Activated CD4-positive, alpha-beta T cell treated with anti-CD3 and anti-CD28 coated beads for 36 hours (primary cell): ENCODE measurements at regions of chr2 and their contacts with region 1.

Region 1: GRCh38 chr2:100562732-100563720 is at the start of gene PDCL3:
- DNase-seq: peak; percentile 96
- ATAC-seq: peak; percentile 96
- H3K4me3 Mint-ChIP-seq: peak within 1 kb of the TSS; percentile 85
- H3K27ac Mint-ChIP-seq: peak within 1 kb of the TSS; percentile 97
- H3K4me1 Mint-ChIP-seq: peaks cover 26% of the 10 kb centered on the region
- H3K27me3 Mint-ChIP-seq: no peaks in the 10 kb centered on the region
- total RNA-seq, gene PDCL3: 39.3 to 41.9 TPM

Region 2: GRCh38 chr2:98608116-98608999 is 1954.7 kb before region 1 on chr2 and contains the starts of genes COA5 and UNC50:
- CTCF ChIA-PET with region 1: no interaction called
- POLR2A ChIA-PET with region 1: no interaction called
- intact Hi-C with region 1: loop called in 1 of 2 experiments (anchors 5 kb)
- DNase-seq: peak; percentile 95
- ATAC-seq: peak; percentile 91
- H3K4me3 Mint-ChIP-seq: peak within 1 kb of the TSS; percentile 83
- H3K27ac Mint-ChIP-seq: peak within 1 kb of the TSS; percentile 94
- H3K4me1 Mint-ChIP-seq: peaks cover 61% of the 10 kb centered on the region
- H3K27me3 Mint-ChIP-seq: no peaks in the 10 kb centered on the region
- total RNA-seq, gene COA5: 17.7 to 33.2 TPM
- total RNA-seq, gene UNC50: 21.1 to 31.4 TPM

Region 3: GRCh38 chr2:99489761-99490622 is 1073.0 kb before region 1 on chr2 and contains the start of gene REV1:
- CTCF ChIA-PET with region 1: no interaction called
- POLR2A ChIA-PET with region 1: no interaction called
- intact Hi-C with region 1: loop called in 1 of 2 experiments (anchors 1 kb)
- DNase-seq: peak; percentile 97
- ATAC-seq: peak; percentile 89
- H3K4me3 Mint-ChIP-seq: peak within 1 kb of the TSS; percentile 89
- H3K27ac Mint-ChIP-seq: peak within 1 kb of the TSS; percentile 99
- H3K4me1 Mint-ChIP-seq: peaks cover 33% of the 10 kb centered on the region
- H3K27me3 Mint-ChIP-seq: no peaks in the 10 kb centered on the region
- total RNA-seq, gene REV1: 30.0 to 38.2 TPM

Region 4: DNA sequence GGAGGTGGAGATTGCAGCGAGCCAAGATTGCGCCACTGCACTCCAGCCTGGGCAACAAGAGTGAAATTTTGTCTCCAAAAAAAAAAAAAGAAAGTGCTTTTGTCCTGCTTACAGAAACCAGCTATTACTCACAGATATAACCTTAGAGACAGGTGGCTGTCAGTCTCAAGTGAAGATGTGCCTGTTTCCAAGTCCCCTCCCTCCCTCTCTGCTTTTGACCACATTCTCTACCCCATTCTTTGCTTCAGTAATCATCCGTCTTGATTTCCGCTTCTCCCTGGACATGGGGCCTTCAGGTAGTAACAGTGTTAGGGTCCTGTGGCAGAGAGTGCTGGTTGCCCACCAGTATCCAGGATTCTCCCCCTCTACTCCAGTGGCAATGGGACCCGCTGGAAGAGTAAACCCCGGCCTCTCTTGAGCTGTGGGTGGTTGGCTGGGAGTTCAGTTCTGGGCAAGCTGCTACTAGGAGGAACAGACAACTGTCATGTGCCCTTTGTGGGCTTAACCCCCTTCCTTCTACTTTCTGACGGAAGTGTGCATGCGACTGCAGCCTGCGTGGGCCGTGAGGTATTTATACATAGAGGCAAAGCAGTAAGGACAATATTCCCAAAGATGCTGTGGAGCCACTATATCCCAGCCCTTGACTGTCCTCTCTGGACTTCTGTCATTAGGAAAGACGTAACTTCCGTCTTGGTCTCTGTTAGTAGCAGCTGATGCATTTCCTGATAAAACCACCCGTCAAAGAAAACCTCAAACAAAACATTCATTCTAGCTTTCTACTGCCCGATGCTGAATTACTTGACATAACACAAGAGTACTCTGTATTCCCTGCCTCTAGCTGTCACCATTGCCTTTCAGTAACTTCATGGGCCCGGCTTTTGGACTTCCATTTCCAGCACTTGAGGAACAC is 17.6 kb after region 1 on chr2:
- CTCF ChIA-PET with region 1: interaction called, 3 read pairs
- POLR2A ChIA-PET with region 1: interaction called, 7 read pairs
- intact Hi-C with region 1: loop called (anchors 1 kb)
- DNase-seq: peak; percentile 64
- ATAC-seq: peak; percentile 88
- H3K4me3 Mint-ChIP-seq: peak overlapping the region; percentile 56
- H3K27ac Mint-ChIP-seq: peak overlapping the region; percentile 95
- H3K4me1 Mint-ChIP-seq: peaks cover 38% of the 10 kb centered on the region
- H3K27me3 Mint-ChIP-seq: no peaks in the 10 kb centered on the region

Region 5: GRCh38 chr2:100767224-100767653 is 204.2 kb after region 1 on chr2:
- CTCF ChIA-PET with region 1: no interaction called
- POLR2A ChIA-PET with region 1: no interaction called
- intact Hi-C with region 1: no loop called
- DNase-seq: no peak
- ATAC-seq: no peak
- H3K4me3 Mint-ChIP-seq: no peak overlapping the region
- H3K27ac Mint-ChIP-seq: no peak overlapping the region
- H3K4me1 Mint-ChIP-seq: no peaks in the 10 kb centered on the region
- H3K27me3 Mint-ChIP-seq: no peaks in the 10 kb centered on the region

Region 6: DNA sequence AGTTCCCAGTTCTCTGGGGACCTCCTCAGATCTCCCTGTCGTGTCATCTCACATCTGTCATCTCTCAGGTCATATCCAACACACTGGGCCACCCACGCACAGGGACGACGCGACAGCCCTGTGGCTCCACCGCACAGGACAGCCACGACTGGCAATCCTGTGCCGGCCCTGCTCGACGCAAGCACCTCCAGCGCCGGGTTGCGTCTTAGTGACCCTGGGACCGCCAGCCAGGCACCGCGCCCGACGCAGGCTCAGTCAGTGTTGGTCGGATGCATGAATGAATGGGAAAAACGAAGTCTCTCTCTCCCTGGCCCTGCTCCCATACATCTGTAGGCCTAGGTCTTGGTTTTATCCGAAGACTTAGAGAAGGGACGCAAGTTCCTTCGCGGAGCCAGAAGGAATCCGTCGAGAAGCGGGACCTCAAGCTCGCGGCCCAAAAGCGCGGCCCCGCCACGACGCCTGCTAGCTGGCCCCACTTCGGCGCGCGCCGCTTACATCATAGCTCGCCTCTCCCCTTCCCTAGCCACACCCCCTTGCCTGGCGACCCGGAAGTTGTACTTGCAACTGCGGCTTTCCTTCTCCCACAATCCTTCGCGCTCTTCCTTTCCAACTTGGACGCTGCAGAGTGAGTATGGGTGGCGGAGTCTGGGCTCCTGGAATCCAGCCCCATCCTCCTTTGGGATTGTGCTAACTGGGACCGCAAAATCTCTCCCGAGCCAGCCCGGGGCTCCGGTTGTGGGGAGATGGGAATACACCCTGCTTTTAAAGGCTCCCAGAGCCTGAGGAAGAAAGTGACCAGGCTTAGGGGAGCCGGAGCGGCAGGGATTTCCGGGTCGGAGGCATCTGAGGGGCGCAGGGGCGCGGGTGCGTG is 438.9 kb after region 1 on chr2 and contains the start of gene RPL31:
- CTCF ChIA-PET with region 1: no interaction called
- POLR2A ChIA-PET with region 1: interaction called, 8 read pairs
- intact Hi-C with region 1: loop called (anchors 1 to 2 kb)
- DNase-seq: peak; percentile 98
- ATAC-seq: peak; percentile 95
- H3K4me3 Mint-ChIP-seq: peak within 1 kb of the TSS; percentile 99
- H3K27ac Mint-ChIP-seq: peak within 1 kb of the TSS; percentile 97
- H3K4me1 Mint-ChIP-seq: peaks cover 41% of the 10 kb centered on the region
- H3K27me3 Mint-ChIP-seq: no peaks in the 10 kb centered on the region
- total RNA-seq, gene RPL31: 889 to 1,817 TPM